ENCODE measurements at regions of chr7 and their contacts with region 1.

Region 1: GRCh38 chr7:138738551-138739335 is 37.6 kb upstream of the SVOPL start:
- DNase-seq: peak; percentile 78
- ATAC-seq: peak; percentile 93
- H3K4me3 ChIP-seq: no peak overlapping the region
- H3K27ac ChIP-seq: no peak overlapping the region
- H3K4me1 ChIP-seq: peaks cover 0 to 12% of the 10 kb centered on the region in 2 experiments; a peak in 2 of 4 replicates
- H3K27me3 ChIP-seq: no peaks in the 10 kb centered on the region
- CTCF ChIP-seq: peak; percentile 86 to 98 (median 93)
- POLR2A ChIP-seq: no peak
- RAD21 ChIP-seq: peak; percentile 98

Region 2: DNA sequence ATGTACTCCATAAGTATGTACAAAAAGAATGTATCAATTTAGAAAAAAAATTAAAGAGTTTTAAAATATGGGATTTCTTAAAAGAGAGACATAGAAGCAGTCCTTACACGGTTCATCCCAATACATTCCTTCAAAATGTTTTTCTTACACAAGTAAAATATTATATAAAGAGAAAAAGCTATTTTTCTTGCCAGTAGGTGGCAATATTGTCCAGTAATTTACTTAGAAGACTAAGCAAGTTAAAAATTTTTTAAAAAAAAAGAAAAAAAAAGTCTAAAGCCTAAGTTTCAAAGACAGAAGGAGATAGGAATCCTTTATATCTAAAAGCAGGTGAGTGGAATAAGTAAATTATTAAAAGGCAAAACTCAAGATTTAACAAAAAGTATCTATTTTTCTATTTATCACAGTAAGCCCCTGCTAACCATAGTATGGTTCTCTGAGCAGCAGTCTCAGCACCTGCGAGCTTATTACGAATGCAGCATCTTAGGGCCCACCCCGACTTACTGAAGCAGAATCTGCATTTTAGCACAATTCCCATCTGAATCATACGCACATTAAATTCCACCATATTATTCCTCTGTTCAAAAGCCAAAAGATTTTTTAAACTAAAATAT is 1132.6 kb before region 1 on chr7:
- CTCF ChIA-PET with region 1: interaction called, 5 read pairs
- POLR2A ChIA-PET with region 1: no interaction called
- RAD21 ChIA-PET with region 1: no interaction called
- intact Hi-C with region 1: loop called (anchors 10 kb)
- DNase-seq: peak; percentile 35
- ATAC-seq: peak; percentile 47; the same call in 1 of the 2 replicates
- H3K4me3 ChIP-seq: no peak overlapping the region
- H3K27ac ChIP-seq: no peak overlapping the region
- H3K4me1 ChIP-seq: no peaks in the 10 kb centered on the region
- H3K27me3 ChIP-seq: peaks cover 32% of the 10 kb centered on the region
- CTCF ChIP-seq: peak; percentile 21 to 45 (median 38); a peak in 3 of 6 replicates
- POLR2A ChIP-seq: no peak
- RAD21 ChIP-seq: peak; percentile 52

Region 3: DNA sequence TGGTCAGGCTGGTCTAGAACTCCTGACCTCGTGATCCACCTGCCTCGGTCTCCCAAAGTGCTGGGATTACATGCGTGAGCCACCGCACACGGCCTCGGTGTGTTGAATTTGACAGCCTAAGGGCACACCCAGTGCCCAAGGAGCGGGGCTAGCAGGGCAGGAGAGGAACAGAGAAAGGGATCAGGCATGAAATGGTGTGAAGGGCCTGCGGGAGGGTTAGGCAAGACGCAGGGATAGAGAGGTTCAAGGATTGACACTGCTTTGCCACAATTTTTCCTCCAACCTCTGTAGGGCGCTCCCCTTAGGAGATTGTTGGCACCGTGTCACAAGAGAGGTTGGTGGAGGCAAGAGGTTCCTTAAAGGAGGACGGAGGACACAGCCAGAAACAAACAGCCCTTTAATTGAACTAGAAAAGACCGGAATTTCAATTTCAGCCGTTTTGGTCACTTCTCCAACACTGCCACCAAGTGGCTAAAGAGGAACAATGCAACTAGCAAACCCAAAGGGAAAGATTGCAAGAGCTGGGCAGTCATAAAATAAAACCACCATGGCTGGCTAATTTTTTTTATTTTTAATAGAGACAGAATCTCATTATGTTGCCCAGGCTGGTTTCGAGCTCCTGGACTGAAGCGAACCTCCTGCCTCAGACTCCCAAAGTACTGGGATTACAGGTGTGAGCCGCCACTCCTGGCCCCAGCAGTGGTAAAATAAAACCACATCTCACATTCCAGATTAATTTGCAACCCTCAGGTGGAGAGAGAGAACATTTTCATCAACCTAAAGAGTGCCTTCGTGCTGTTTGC is 730.0 kb before region 1 on chr7:
- CTCF ChIA-PET with region 1: interaction called, 8 read pairs
- POLR2A ChIA-PET with region 1: no interaction called
- RAD21 ChIA-PET with region 1: no interaction called
- intact Hi-C with region 1: loop called (anchors 2 kb)
- DNase-seq: peak; percentile 56
- ATAC-seq: peak; percentile 78
- H3K4me3 ChIP-seq: no peak overlapping the region
- H3K27ac ChIP-seq: no peak overlapping the region
- H3K4me1 ChIP-seq: peaks cover 3% of the 10 kb centered on the region in 2 experiments; a peak in 1 of 4 replicates
- H3K27me3 ChIP-seq: no peaks in the 10 kb centered on the region
- CTCF ChIP-seq: peak; percentile 78 to 91 (median 80)
- POLR2A ChIP-seq: no peak
- RAD21 ChIP-seq: peak; percentile 96

Region 4: GRCh38 chr7:138161600-138162081 is 577.1 kb before region 1 on chr7:
- CTCF ChIA-PET with region 1: interaction called, 96 read pairs
- POLR2A ChIA-PET with region 1: interaction called, 3 read pairs
- RAD21 ChIA-PET with region 1: interaction called, 7 to 18 read pairs
- intact Hi-C with region 1: loop called (anchors 1 kb)
- DNase-seq: peak; percentile 85
- ATAC-seq: peak; percentile 98
- H3K4me3 ChIP-seq: 0 out of 4 replicates have a peak overlapping the region, but pooled peaks of 1 of the 2 experiments have one; percentile 15
- H3K27ac ChIP-seq: no peak overlapping the region
- H3K4me1 ChIP-seq: peaks cover 0 to 8% of the 10 kb centered on the region in 2 experiments; a peak in 2 of 4 replicates
- H3K27me3 ChIP-seq: no peaks in the 10 kb centered on the region
- CTCF ChIP-seq: peak; percentile 66 to 78 (median 74)
- POLR2A ChIP-seq: no peak
- RAD21 ChIP-seq: peak; percentile 86

Region 5: GRCh38 chr7:138750901-138751464 is 12.2 kb after region 1 on chr7:
- CTCF ChIA-PET with region 1: interaction called, 14 read pairs
- POLR2A ChIA-PET with region 1: interaction called, 3 read pairs
- RAD21 ChIA-PET with region 1: no interaction called
- intact Hi-C with region 1: no loop called
- DNase-seq: no peak
- ATAC-seq: no peak
- H3K4me3 ChIP-seq: no peak overlapping the region
- H3K27ac ChIP-seq: no peak overlapping the region
- H3K4me1 ChIP-seq: peaks cover 6 to 18% of the 10 kb centered on the region in 2 experiments; a peak in 3 of 4 replicates
- H3K27me3 ChIP-seq: no peaks in the 10 kb centered on the region
- CTCF ChIP-seq: no peak
- POLR2A ChIP-seq: no peak
- RAD21 ChIP-seq: no peak

Measured in HCT116 (cell line).